Right cardiac atrium (tissue), 5 donors: ENCODE measurements at regions of chr1 and their contacts with region 1.

Region 1: DNA sequence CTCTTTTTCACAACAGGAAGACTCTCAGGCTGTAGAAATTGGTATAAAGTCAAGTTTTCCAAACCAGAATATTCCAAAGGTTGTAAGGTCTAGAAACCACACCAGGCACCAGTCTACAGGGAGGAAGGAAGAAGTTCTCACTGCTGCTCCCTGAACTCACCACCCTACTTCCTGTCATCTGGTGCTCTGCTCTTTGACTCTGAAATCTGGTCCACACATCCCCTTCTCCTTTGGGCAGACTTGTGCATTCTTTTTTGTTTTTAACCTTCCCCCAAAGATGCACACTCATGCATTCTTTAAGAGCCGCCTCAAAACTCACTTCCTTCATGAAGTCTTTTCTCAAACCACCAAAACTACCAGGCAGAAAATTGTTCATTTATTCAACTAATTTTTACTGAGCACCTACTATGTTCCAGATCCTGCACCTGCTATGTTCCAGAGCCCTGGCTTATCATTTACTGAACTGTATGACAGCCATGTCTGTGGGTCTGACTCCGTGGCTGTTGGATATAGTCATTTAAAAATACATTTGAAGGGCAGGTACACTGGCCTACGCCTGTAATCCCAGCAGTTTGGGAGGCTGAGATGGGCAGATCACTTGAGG is 30.1 kb upstream of the EPS15 start:
- DNase-seq: no peak
- ATAC-seq: peak; percentile 44 to 45
- H3K4me3 ChIP-seq: no peak overlapping the region
- H3K27ac ChIP-seq: no peak overlapping the region
- H3K4me1 ChIP-seq: no peaks in the 10 kb centered on the region
- H3K27me3 ChIP-seq: no peaks in the 10 kb centered on the region

Region 2: DNA sequence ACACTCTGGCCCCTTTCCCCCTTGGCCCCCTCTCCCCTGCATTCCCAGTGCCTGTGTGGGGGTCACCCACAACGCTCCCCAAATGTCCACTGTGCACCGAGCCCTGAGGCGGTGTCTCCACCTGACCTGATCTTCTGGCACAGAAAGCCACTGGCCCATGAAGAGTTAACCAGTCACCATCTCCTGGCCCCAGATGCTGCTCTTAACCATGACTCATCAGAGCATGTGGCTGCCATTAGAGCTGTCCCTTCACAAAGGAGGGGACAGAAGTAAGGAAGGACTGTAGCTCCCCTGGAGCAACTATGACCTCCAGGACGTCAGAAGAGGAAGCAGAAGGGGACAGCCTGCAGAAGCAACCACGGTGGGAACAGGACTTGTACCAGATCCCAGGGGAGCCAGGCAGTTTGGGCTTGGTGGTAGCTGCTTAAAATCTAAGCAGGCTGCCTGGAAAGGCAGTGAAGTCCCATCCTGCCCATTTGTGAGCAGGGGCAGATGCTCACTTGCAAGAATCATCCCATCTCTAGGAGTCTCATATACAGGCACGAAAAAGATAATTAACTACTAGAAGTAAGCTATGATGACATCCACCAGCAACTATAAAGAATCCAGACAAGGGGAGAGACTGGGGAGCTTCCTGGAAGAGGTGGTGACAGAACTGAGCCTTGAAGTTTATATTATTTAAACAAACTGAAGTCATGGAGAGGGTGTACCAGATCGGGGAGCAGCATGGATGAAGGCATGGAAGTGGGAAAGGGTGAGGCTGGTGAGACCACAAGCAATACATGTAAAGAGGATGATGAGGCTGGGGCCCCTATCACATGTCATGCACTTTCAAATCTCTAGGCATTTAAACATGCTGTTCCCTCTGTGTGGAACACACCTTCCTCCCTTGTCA is 217.7 kb before region 1 on chr1:
- intact Hi-C with region 1: no loop called
- DNase-seq: peak in 1 of 3 donors; percentile 44
- ATAC-seq: peak; percentile 54 to 68
- H3K4me3 ChIP-seq: peak overlapping the region; percentile 89
- H3K27ac ChIP-seq: peak overlapping the region; percentile 12
- H3K4me1 ChIP-seq: peaks cover 5% of the 10 kb centered on the region
- H3K27me3 ChIP-seq: no peaks in the 10 kb centered on the region

Region 3: GRCh38 chr1:51583532-51583931 is 34.4 kb after region 1 on chr1:
- intact Hi-C with region 1: loop called in 1 of 4 experiments (anchors 2 kb)
- DNase-seq: peak; percentile 93 to 96 (median 94)
- ATAC-seq: peak; percentile 99
- H3K4me3 ChIP-seq: no peak overlapping the region
- H3K27ac ChIP-seq: peak overlapping the region; percentile 78
- H3K4me1 ChIP-seq: peaks cover 3% of the 10 kb centered on the region
- H3K27me3 ChIP-seq: no peaks in the 10 kb centered on the region

Region 4: GRCh38 chr1:51799372-51799771 is 250.3 kb after region 1 on chr1:
- intact Hi-C with region 1: no loop called
- DNase-seq: no peak
- ATAC-seq: peak; percentile 42 to 67
- H3K4me3 ChIP-seq: no peak overlapping the region
- H3K27ac ChIP-seq: no peak overlapping the region
- H3K4me1 ChIP-seq: no peaks in the 10 kb centered on the region
- H3K27me3 ChIP-seq: no peaks in the 10 kb centered on the region